CD4-positive, alpha-beta memory T cell (primary cell): ENCODE measurements at regions of chr9 and their contacts with region 1.

Region 1: DNA sequence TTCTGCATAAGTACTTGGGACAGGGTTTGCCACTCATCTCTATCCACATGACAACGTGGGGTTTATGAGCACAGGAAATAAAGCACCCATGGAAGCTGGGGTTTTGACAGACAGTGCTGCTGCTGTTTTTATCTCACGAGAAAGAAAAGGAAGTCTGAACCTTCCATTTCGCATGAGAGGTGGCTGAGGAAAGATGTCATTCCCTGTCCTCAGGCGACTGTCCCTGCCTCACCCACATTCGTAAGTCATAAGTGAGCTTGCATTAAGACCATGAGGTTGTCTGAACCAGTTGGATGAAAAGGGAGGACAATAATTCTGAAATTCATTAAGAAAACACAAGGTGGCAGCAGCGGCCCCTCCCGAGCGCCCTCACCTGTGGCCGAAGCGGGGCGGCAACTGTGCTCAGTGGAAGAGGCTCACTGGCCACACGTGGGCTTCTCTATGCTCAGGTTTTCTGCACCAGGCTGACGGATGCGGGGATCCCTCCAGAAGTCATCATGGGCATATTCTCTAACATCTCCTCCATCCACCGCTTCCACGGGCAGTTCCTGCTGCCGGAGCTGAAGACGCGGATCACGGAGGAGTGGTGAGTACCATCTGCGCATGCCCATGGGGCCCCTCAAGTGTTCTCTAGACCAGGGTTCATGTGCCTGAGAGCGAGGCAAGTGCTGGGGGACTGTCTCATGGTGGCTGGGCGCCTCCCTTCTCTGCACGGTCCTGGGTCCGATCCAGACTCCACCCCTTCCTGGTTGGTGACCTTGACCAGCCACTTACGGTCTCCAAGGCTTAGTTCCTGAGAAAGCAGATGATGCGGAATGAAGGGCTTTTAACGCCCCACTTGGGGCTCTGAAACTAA is 54.7 kb upstream of the SUSD3 start:
- DNase-seq: peak; percentile 64 to 73 (median 72)
- H3K4me3 ChIP-seq: no peak overlapping the region
- H3K4me3 Mint-ChIP-seq: peak overlapping the region in 7 of 8 donors; percentile 29 to 78 (median 54)
- H3K27ac ChIP-seq: peak overlapping the region; percentile 44
- H3K27ac Mint-ChIP-seq: peak overlapping the region; percentile 89 to 95 (median 92)
- H3K4me1 ChIP-seq: peaks cover 56% of the 10 kb centered on the region
- H3K4me1 Mint-ChIP-seq: peaks cover 38 to 66% (median 50%) of the 10 kb centered on the region in 4 donors
- H3K27me3 ChIP-seq: no peaks in the 10 kb centered on the region
- H3K27me3 Mint-ChIP-seq: no peaks in the 10 kb centered on the region

Region 2: DNA sequence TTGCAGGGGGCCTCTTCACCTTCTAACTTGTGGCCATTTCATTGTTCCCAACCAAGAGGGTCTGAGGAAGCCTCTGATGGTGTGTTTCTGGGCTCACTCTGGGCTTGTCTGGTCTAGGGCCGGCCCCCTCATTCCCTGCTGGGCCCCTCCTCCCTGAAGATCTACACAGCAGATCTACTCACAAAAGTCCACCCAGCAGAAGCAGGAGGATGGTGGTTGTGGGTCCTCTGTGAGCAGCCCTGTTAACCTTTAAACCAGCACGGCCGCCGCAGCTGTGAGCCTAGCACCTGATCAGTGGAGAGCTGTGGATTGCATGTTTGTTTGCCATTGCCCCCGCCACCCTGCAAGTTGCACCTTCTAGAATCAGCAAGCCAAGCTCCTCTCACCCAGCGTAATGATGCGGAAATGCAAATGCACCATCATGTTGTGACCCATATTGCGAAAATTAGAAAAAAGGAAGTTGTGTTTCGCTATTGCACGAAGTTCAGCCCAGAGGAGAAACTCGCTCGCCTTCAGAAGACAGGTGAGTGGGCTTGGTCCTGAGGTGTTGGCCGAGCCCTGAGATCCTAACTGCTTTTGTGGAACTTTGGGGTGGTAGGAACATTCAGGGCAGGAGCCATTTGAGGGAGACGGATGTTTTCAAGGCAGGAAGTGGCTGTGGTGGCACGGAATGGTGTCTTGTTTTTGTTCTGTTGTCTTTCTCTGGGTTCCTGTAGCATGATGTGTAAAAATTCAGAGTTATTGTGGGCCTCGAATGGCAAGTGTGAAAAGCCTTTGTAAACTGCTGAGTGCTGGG is 39.8 kb before region 1 on chr9:
- CTCF ChIA-PET with region 1: interaction called, 37 read pairs
- POLR2A ChIA-PET with region 1: interaction called, 100 read pairs
- intact Hi-C with region 1: no loop called
- DNase-seq: peak; percentile 87 to 92 (median 90)
- H3K4me3 ChIP-seq: peak overlapping the region; percentile 86 to 97
- H3K4me3 Mint-ChIP-seq: peak overlapping the region; percentile 93 to 99 (median 94)
- H3K27ac ChIP-seq: peak overlapping the region; percentile 84
- H3K27ac Mint-ChIP-seq: peak overlapping the region; percentile 96 to 100 (median 98)
- H3K4me1 ChIP-seq: peaks cover 81% of the 10 kb centered on the region
- H3K4me1 Mint-ChIP-seq: peaks cover 30 to 90% (median 57%) of the 10 kb centered on the region in 4 donors
- H3K27me3 ChIP-seq: no peaks in the 10 kb centered on the region
- H3K27me3 Mint-ChIP-seq: no peaks in the 10 kb centered on the region

Region 3: DNA sequence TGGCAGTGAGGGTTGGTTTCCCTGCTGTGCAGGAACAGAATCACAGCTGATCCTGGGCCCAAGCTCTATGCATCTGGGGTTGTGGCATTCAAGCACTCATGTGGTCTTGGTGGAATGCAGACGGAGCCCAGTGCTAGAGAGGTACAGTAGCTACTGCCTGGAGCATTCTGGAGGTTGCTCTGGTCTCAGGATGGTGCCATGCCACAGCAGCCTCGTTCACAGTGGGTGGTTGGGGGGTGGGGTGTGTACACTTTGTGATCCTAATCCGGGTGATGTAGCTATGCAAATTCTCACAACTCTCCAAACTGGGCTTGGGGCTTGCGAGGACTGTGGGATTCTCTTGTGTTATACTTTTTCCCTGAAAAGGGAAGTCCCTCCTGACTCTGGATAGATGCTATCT is 11.2 kb before region 1 on chr9:
- CTCF ChIA-PET with region 1: interaction called, 50 read pairs
- POLR2A ChIA-PET with region 1: interaction called, 9 read pairs
- intact Hi-C with region 1: no loop called
- DNase-seq: no peak
- H3K4me3 ChIP-seq: no peak overlapping the region
- H3K4me3 Mint-ChIP-seq: peak overlapping the region in 5 of 8 donors; percentile 9 to 65 (median 32)
- H3K27ac ChIP-seq: no peak overlapping the region
- H3K27ac Mint-ChIP-seq: peak overlapping the region; percentile 43 to 89 (median 69)
- H3K4me1 ChIP-seq: peaks cover 60% of the 10 kb centered on the region
- H3K4me1 Mint-ChIP-seq: peaks cover 81 to 100% (median 93%) of the 10 kb centered on the region in 4 donors
- H3K27me3 ChIP-seq: no peaks in the 10 kb centered on the region
- H3K27me3 Mint-ChIP-seq: no peaks in the 10 kb centered on the region

Region 4: GRCh38 chr9:93028448-93029006 is 24.7 kb after region 1 on chr9:
- CTCF ChIA-PET with region 1: interaction called, 29 read pairs
- POLR2A ChIA-PET with region 1: interaction called, 322 read pairs
- intact Hi-C with region 1: no loop called
- DNase-seq: peak; percentile 84 to 94 (median 89)
- H3K4me3 ChIP-seq: peak overlapping the region; percentile 52 to 55
- H3K4me3 Mint-ChIP-seq: peak overlapping the region; percentile 82 to 90 (median 86)
- H3K27ac ChIP-seq: peak overlapping the region; percentile 91
- H3K27ac Mint-ChIP-seq: peak overlapping the region; percentile 94 to 99 (median 96)
- H3K4me1 ChIP-seq: peaks cover 95% of the 10 kb centered on the region
- H3K4me1 Mint-ChIP-seq: peaks cover 43 to 95% (median 78%) of the 10 kb centered on the region in 4 donors
- H3K27me3 ChIP-seq: no peaks in the 10 kb centered on the region
- H3K27me3 Mint-ChIP-seq: no peaks in the 10 kb centered on the region

Region 5: GRCh38 chr9:93058355-93059096 is 54.7 kb after region 1 on chr9 and contains the start of gene SUSD3:
- CTCF ChIA-PET with region 1: interaction called, 21 read pairs
- POLR2A ChIA-PET with region 1: interaction called, 10 read pairs
- intact Hi-C with region 1: no loop called
- DNase-seq: peak; percentile 58 to 76 (median 63)
- H3K4me3 ChIP-seq: peak within 1 kb of the TSS; percentile 86 to 92
- H3K4me3 Mint-ChIP-seq: peak within 1 kb of the TSS; percentile 94 to 95 (median 95)
- H3K27ac ChIP-seq: peak within 1 kb of the TSS; percentile 72
- H3K27ac Mint-ChIP-seq: peak within 1 kb of the TSS; percentile 96 to 100 (median 99)
- H3K4me1 ChIP-seq: peaks cover 76% of the 10 kb centered on the region
- H3K4me1 Mint-ChIP-seq: peaks cover 30 to 82% (median 58%) of the 10 kb centered on the region in 4 donors
- H3K27me3 ChIP-seq: no peaks in the 10 kb centered on the region
- H3K27me3 Mint-ChIP-seq: no peaks in the 10 kb centered on the region
- total RNA-seq, gene SUSD3: 58.3 to 63.7 TPM

Region 6: GRCh38 chr9:93108291-93109041 is 104.7 kb after region 1 on chr9:
- CTCF ChIA-PET with region 1: interaction called, 68 read pairs
- POLR2A ChIA-PET with region 1: interaction called, 10 read pairs
- intact Hi-C with region 1: no loop called
- DNase-seq: peak in 1 of 5 donors; percentile 44
- H3K4me3 ChIP-seq: no peak overlapping the region
- H3K4me3 Mint-ChIP-seq: peak overlapping the region in 2 of 8 donors; percentile 22 to 63
- H3K27ac ChIP-seq: peak overlapping the region; percentile 6
- H3K27ac Mint-ChIP-seq: peak overlapping the region in 4 of 7 donors; percentile 12 to 84 (median 70)
- H3K4me1 ChIP-seq: peaks cover 52% of the 10 kb centered on the region
- H3K4me1 Mint-ChIP-seq: peaks cover 26 to 60% (median 46%) of the 10 kb centered on the region in 4 donors
- H3K27me3 ChIP-seq: no peaks in the 10 kb centered on the region
- H3K27me3 Mint-ChIP-seq: no peaks in the 10 kb centered on the region

Region 7: DNA sequence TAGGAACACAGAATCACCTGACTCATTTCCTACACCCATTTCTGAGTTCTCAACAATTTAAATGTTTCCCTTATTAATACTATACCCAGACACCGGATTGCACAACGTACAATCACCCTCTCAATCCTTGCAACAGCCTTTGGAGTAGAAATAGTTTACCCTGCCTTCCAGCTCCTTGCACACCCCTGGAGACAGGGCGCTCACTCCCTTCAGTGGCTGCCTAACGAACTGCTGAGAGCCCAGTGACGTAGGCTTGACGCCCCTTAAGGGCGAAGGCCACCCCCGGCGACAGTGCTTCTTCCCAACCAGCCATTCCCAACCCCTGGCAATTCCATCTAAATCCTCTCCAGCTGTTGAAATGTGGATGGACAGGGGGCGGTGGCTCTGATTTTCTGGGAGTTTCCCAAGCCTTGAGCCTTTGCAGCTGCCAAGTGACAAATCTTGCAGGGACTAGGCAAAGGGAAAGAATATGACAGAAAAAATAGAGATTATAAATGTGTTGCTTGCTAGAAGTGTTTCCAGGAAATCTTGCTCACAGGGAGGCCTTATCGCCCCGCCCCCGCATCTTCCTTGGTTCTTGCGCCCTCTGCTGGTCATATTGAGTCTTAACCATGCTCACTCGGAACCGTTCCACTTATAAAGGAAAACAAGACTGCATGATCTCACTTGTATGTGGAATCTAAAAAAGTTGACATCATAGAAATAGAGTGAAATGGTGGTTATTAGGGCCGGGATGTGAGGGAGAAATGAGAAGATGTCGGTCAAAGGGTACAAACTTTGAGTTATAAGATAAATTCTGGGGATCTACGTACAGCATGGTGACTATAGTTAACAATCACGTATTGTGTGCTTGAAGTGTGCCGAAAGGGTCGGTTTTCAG is 959.0 kb after region 1 on chr9:
- CTCF ChIA-PET with region 1: no interaction called
- POLR2A ChIA-PET with region 1: no interaction called
- intact Hi-C with region 1: loop called (anchors 2 kb)
- DNase-seq: peak; percentile 75 to 77 (median 75)
- H3K4me3 ChIP-seq: no peak overlapping the region
- H3K4me3 Mint-ChIP-seq: peak overlapping the region in 2 of 8 donors; percentile 6 to 21
- H3K27ac ChIP-seq: no peak overlapping the region
- H3K27ac Mint-ChIP-seq: no peak overlapping the region
- H3K4me1 ChIP-seq: peaks cover 38% of the 10 kb centered on the region
- H3K4me1 Mint-ChIP-seq: peaks cover 12 to 44% (median 26%) of the 10 kb centered on the region in 4 donors
- H3K27me3 ChIP-seq: peaks cover 21% of the 10 kb centered on the region
- H3K27me3 Mint-ChIP-seq: peaks cover 32 to 47% of the 10 kb centered on the region in 2 donors